GM10248 (cell line): ENCODE measurements at regions of chr13 and their contacts with region 1.

Region 1: GRCh38 chr13:68110178-68110768 is 880.1 kb upstream of the PCDH9 start:
- DNase-seq: no peak
- CTCF ChIP-seq: no peak

Region 2: GRCh38 chr13:68099616-68100015 is 10.7 kb before region 1 on chr13:
- CTCF ChIA-PET with region 1: no interaction called
- POLR2A ChIA-PET with region 1: no interaction called
- DNase-seq: no peak
- CTCF ChIP-seq: no peak

Region 3: DNA sequence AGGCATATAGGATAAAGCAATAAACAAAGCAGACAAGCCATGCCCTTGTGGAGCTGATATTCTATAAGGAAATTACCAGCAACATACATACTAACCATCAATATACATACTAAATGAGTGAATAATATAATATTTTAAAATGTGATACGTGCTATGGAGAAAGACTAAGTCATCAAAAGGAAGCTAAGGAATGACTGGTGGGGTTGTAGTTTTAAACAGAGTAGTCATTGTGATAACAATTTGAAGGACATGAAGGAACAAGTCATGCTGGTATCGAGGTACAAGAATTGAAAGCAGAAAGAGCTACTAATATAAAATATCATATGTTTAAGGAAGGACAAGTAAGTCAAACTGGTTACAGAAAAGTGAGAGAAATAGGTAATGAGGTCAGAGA is 14.8 kb after region 1 on chr13:
- CTCF ChIA-PET with region 1: interaction called, 19 read pairs
- POLR2A ChIA-PET with region 1: no interaction called
- DNase-seq: no peak
- CTCF ChIP-seq: no peak

Region 4: GRCh38 chr13:68476461-68476860 is 366.2 kb after region 1 on chr13:
- CTCF ChIA-PET with region 1: no interaction called
- POLR2A ChIA-PET with region 1: no interaction called
- DNase-seq: no peak
- CTCF ChIP-seq: no peak